ENCODE measurements at regions of chr14 and their contacts with region 1.

Region 1: DNA sequence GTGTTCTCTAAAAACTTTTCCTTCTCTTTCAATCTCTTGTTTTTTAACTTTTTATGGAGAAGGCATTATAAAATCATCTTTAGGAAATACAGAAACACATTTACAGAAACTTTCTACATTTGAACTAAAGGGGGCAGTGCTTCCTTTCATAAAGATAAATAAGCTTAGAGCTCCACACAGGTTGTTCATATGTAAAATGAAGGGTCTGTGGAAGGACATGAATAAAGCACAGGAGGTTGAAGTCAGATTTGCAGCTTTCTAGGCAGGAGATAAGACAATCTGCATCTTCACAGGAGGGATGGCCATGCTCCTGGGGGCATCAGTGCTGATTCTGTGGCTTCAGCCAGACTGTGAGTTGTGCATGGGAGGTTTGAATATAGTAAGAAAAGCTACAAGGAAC is 426.0 kb downstream of the DAD1 start:
- DNase-seq: no peak
- H3K4me3 ChIP-seq: no peak overlapping the region
- H3K27ac ChIP-seq: no peak overlapping the region
- H3K4me1 ChIP-seq: no peaks in the 10 kb centered on the region; a peak in 2 of 7 replicates
- H3K27me3 ChIP-seq: no peaks in the 10 kb centered on the region
- CTCF ChIP-seq: peak in 2 of 3 experiments; percentile 17 to 34; a peak in 2 of 4 replicates
- EP300 ChIP-seq: no peak
- POLR2A ChIP-seq: no peak
- RAD21 ChIP-seq: peak; percentile 38 to 41; a peak in 3 of 4 replicates

Region 2: GRCh38 chr14:22122227-22122818 is 40.7 kb before region 1 on chr14:
- CTCF ChIA-PET with region 1: interaction called, 10 read pairs
- POLR2A ChIA-PET with region 1: no interaction called
- DNase-seq: no peak
- H3K4me3 ChIP-seq: no peak overlapping the region
- H3K27ac ChIP-seq: no peak overlapping the region
- H3K4me1 ChIP-seq: no peaks in the 10 kb centered on the region
- H3K27me3 ChIP-seq: no peaks in the 10 kb centered on the region
- CTCF ChIP-seq: peak in 2 of 3 experiments; percentile 44 to 60; a peak in 3 of 4 replicates
- EP300 ChIP-seq: no peak
- POLR2A ChIP-seq: no peak
- RAD21 ChIP-seq: peak; percentile 55 to 65

Region 3: DNA sequence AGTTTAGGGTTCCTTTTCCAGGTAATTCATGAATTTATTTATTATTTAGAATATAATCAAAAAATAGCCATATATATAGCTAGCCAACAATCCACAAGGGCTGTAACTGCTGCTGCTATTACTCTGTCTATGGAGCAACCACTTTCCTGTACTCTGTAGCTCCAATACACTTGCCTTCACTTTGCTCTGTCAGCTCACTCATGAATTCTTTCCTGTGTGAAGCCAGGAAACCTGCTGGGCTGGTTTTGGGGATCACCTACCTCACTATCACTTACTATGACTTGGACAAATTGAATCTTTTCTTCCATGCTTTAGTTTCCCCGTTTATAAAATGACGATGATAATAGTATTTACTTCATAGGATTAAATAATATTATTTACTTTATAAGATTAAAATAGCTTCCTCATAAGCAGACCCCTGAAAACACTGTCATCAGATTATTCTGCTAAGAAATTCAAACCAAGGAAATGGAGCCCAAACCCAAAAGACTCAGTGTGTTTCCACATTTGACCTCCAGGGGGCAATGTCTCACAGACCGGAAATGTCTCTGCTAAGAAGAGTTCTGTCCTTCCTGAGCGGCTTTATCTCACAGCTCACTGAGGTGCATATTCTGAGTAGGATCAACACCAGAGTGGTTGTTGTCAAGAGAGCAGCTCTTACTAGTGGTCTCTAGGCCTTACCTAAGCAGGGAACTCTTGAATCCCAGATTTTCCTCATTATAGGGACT is 31.1 kb before region 1 on chr14:
- CTCF ChIA-PET with region 1: interaction called, 11 read pairs
- POLR2A ChIA-PET with region 1: no interaction called
- DNase-seq: peak in 1 of 2 experiments; percentile 78
- H3K4me3 ChIP-seq: no peak overlapping the region
- H3K27ac ChIP-seq: no peak overlapping the region
- H3K4me1 ChIP-seq: no peaks in the 10 kb centered on the region
- H3K27me3 ChIP-seq: no peaks in the 10 kb centered on the region
- CTCF ChIP-seq: peak; percentile 41 to 73 (median 55)
- EP300 ChIP-seq: no peak
- POLR2A ChIP-seq: no peak
- RAD21 ChIP-seq: peak; percentile 30 to 46; a peak in 3 of 4 replicates

Region 4: DNA sequence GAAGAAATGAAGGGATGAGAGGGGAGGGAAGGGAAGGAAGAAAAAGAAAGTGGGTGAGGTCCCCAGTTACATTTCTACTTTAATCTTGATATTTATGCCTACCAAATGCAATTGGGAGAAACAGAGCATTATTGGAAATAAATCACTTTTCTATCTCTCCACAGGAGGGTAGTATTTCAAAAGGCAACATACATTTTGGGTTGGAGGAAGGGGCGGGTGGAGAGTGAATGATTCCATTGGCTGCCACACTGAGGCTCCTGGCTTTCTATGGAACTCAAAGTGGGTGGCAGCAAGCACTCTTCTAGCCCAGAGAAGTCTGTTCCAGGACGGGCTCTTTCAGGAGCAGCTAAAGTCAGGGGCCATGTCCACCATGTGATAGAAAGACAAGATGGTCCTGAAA is 15.3 kb before region 1 on chr14:
- CTCF ChIA-PET with region 1: interaction called, 13 read pairs
- POLR2A ChIA-PET with region 1: no interaction called
- DNase-seq: no peak
- H3K4me3 ChIP-seq: no peak overlapping the region
- H3K27ac ChIP-seq: no peak overlapping the region
- H3K4me1 ChIP-seq: no peaks in the 10 kb centered on the region
- H3K27me3 ChIP-seq: no peaks in the 10 kb centered on the region
- CTCF ChIP-seq: no peak
- EP300 ChIP-seq: no peak
- POLR2A ChIP-seq: no peak
- RAD21 ChIP-seq: no peak

Region 5: GRCh38 chr14:22177870-22178269 is 14.8 kb after region 1 on chr14:
- CTCF ChIA-PET with region 1: interaction called, 12 read pairs
- POLR2A ChIA-PET with region 1: no interaction called
- DNase-seq: no peak
- H3K4me3 ChIP-seq: no peak overlapping the region
- H3K27ac ChIP-seq: no peak overlapping the region
- H3K4me1 ChIP-seq: 0 out of 7 replicates have a peak, but pooled peaks cover 0 to 2% (median 0%) of the 10 kb centered on the region in 4 experiments
- H3K27me3 ChIP-seq: no peaks in the 10 kb centered on the region
- CTCF ChIP-seq: no peak
- EP300 ChIP-seq: no peak
- POLR2A ChIP-seq: no peak
- RAD21 ChIP-seq: no peak

Region 6: DNA sequence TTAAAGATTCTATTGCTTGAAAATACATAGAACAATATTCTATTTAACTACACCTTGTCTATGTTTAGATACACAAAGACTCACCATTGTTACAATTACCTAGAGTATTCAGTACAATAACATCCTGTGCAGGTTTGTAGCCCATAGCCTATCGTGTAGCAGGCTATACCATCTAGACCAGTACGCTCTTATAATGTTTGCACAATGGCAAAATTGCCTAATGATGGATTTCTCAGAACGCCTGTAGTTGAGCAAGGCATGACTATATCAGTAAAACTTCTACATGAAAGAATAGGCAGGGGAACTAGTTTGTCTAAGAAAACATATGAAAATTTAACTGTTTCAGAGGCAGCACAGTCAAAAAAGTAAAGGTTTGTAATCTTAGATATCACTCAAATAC is 50.1 kb after region 1 on chr14:
- CTCF ChIA-PET with region 1: no interaction called
- POLR2A ChIA-PET with region 1: no interaction called
- DNase-seq: no peak
- H3K4me3 ChIP-seq: no peak overlapping the region
- H3K27ac ChIP-seq: no peak overlapping the region
- H3K4me1 ChIP-seq: no peaks in the 10 kb centered on the region
- H3K27me3 ChIP-seq: no peaks in the 10 kb centered on the region
- CTCF ChIP-seq: no peak
- EP300 ChIP-seq: no peak
- POLR2A ChIP-seq: no peak
- RAD21 ChIP-seq: no peak

Region 7: GRCh38 chr14:22232486-22232885 is 69.4 kb after region 1 on chr14:
- CTCF ChIA-PET with region 1: no interaction called
- POLR2A ChIA-PET with region 1: no interaction called
- DNase-seq: no peak
- H3K4me3 ChIP-seq: no peak overlapping the region
- H3K27ac ChIP-seq: no peak overlapping the region
- H3K4me1 ChIP-seq: peaks cover 0 to 3% (median 1%) of the 10 kb centered on the region in 4 experiments; a peak in 1 of 7 replicates
- H3K27me3 ChIP-seq: no peaks in the 10 kb centered on the region
- CTCF ChIP-seq: no peak
- EP300 ChIP-seq: no peak
- POLR2A ChIP-seq: no peak
- RAD21 ChIP-seq: no peak

Measured in H1 (cell line).